Activated CD4-positive, alpha-beta T cell treated with anti-CD3 and anti-CD28 coated beads, Interleukin-2, amount 10 ng/mL, durations not matched to agents 7 days and 5 days (primary cell): ENCODE measurements at regions of chr17 and their contacts with region 1.

Region 1: GRCh38 chr17:76278952-76279741 is 14.0 kb downstream of the UBALD2 start:
- DNase-seq: peak; percentile 87
- H3K4me3 Mint-ChIP-seq: no peak overlapping the region
- H3K27ac Mint-ChIP-seq: no peak overlapping the region
- H3K4me1 Mint-ChIP-seq: peaks cover 28% of the 10 kb centered on the region
- H3K27me3 Mint-ChIP-seq: no peaks in the 10 kb centered on the region

Region 2: DNA sequence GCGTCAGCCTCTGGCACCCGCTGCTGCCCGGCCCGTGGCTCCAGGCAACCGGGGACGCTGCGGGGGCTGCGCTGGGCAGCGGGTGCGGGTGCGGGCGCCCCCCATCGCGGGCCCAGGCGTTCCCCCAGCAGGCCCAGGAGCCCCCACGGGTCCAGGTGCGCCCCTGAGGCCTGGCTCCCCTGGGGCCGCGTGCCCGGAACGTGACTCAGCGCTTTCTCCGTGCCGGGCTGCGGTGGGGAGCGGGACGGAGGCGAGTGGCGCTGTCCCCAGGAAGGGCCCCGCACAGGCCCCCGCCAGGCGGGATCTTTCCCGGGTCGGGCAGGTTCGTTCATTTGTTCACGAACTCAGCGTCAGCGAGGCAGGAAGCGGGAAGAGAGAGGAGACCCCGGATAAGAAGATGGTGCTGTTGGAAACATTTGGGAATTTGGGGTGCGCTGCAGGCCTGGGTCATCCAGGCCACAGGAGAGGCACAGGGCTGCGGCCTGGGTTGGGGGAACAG is 157.2 kb before region 1 on chr17:
- CTCF ChIA-PET with region 1: interaction called, 160 read pairs
- POLR2A ChIA-PET with region 1: no interaction called
- DNase-seq: no peak
- H3K4me3 Mint-ChIP-seq: peak overlapping the region; percentile 10
- H3K27ac Mint-ChIP-seq: peak overlapping the region; percentile 83
- H3K4me1 Mint-ChIP-seq: peaks cover 27% of the 10 kb centered on the region
- H3K27me3 Mint-ChIP-seq: no peaks in the 10 kb centered on the region

Region 3: GRCh38 chr17:76147211-76148014 is 131.7 kb before region 1 on chr17:
- CTCF ChIA-PET with region 1: interaction called, 12 read pairs
- POLR2A ChIA-PET with region 1: no interaction called
- DNase-seq: no peak
- H3K4me3 Mint-ChIP-seq: no peak overlapping the region
- H3K27ac Mint-ChIP-seq: peak overlapping the region; percentile 94
- H3K4me1 Mint-ChIP-seq: peaks cover 73% of the 10 kb centered on the region
- H3K27me3 Mint-ChIP-seq: no peaks in the 10 kb centered on the region

Region 4: DNA sequence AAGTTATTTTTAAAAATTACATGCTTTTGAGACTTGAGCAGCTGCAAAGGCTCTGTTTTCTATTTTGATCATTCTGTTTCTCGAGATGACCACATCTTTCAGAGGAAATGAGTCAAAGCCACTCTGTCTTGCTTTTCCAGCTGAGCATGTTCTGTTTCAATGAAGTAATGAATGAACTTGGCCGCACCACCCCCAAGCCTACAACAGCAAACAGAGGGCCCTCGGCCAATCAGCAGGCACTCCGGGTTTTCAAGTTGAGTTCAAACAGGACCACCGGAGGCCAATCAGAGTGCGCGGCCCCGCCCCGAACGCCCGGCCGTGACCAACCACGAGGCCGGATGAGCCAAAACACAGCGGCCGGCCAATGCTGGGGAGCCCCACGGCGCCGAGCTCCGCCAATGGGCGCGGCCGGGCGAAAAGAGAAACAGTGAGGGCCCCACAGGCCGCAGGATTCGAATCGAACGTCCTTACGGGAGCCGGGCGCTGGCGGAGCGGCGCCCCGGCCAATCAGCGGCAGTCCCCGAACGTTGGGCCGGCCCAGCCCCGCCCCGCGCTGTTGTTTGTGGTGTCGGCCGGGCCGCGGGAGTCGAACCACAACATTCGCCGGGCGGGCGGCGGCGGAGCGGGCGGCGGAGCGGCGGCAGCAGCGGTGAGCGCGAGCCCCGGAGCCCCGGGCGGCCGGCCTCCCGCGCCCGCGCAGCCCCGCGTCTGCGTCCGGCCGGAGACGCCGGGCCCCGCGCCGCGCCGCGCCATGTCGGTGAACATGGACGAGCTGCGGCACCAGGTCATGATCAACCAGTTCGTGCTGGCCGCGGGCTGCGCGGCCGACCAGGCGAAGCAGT is 14.2 kb before region 1 on chr17 and contains the start of gene UBALD2:
- CTCF ChIA-PET with region 1: interaction called, 32 read pairs
- POLR2A ChIA-PET with region 1: interaction called, 3 read pairs
- DNase-seq: peak; percentile 99
- H3K4me3 Mint-ChIP-seq: peak within 1 kb of the TSS; percentile 93
- H3K27ac Mint-ChIP-seq: peak within 1 kb of the TSS; percentile 99
- H3K4me1 Mint-ChIP-seq: peaks cover 60% of the 10 kb centered on the region
- H3K27me3 Mint-ChIP-seq: no peaks in the 10 kb centered on the region
- total RNA-seq, gene UBALD2: 319 to 399 TPM

Region 5: GRCh38 chr17:76562734-76563148 is 283.6 kb after region 1 on chr17:
- CTCF ChIA-PET with region 1: no interaction called
- POLR2A ChIA-PET with region 1: no interaction called
- DNase-seq: no peak
- H3K4me3 Mint-ChIP-seq: no peak overlapping the region
- H3K27ac Mint-ChIP-seq: peak overlapping the region; percentile 72
- H3K4me1 Mint-ChIP-seq: peaks cover 46% of the 10 kb centered on the region
- H3K27me3 Mint-ChIP-seq: no peaks in the 10 kb centered on the region